GM13976 (cell line): ENCODE measurements at regions of chr20 and their contacts with region 1.

Region 1: DNA sequence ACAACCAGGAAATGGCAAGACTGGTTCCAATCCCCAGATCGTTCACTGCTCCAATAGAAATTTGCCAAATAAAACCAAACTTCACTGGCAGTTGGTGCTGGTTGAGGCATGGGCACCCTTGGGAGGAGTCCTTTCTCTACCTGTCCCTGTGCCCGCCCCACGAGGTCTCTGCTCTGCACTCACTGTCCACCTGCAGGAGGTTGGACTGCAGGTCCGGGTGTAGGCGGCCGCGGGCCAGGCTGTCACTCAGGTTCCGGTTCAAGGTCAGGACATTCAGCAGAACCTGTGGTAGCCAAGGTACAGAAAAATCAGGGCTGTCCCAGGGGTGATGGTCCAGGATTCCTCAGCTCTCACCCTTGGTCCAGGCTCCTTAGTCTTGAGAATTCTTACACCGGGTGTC is 22.9 kb downstream of the GGT7 start:
- DNase-seq: no peak
- CTCF ChIP-seq: no peak

Region 2: GRCh38 chr20:35111141-35111888 is 261.5 kb after region 1 on chr20:
- in situ Hi-C with region 1: loop called (anchors 10 kb)
- DNase-seq: no peak
- CTCF ChIP-seq: no peak